ENCODE measurements at regions of chr10 and their contacts with region 1.

Region 1: DNA sequence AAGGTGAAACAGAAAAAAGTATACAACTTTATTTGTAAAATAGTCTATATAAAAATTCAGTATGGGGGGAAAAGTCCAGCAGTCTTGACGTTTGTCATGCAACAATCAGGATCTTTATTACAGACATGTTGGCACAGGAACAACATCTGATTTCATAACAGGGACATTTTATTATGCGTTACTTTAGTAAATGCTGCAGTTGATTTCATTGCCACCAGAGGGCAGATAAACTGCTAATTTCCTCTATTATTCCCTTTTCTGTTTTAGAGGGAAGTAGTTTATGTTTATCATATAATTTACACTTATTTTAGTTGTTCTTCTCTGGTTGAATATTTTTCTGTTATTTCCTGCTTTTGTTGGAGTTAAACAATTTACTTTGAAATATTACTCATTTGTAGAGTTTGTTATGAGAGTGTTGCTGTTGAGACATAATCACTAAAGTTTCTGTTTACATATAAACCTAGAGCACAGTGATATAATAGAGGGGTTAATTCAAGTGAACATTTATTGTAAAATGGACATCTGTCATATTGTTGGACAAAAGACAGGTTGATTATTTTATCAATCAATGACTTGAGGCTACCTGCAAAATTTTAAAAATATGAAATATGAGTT is 3.3 kb downstream of the PLXDC2 start:
- DNase-seq: no peak
- H3K4me3 ChIP-seq: peak overlapping the region; percentile 72 to 85
- H3K27ac ChIP-seq: peak overlapping the region; percentile 16 to 94
- H3K4me1 ChIP-seq: peaks cover 0 to 31% of the 10 kb centered on the region in 2 donors
- H3K27me3 ChIP-seq: no peaks in the 10 kb centered on the region
- CTCF ChIP-seq: peak; percentile 61 to 77 (median 61)

Region 2: GRCh38 chr10:19412531-19412930 is 407.0 kb before region 1 on chr10:
- intact Hi-C with region 1: loop called (anchors 10 kb)
- DNase-seq: no peak
- H3K4me3 ChIP-seq: no peak overlapping the region
- H3K27ac ChIP-seq: no peak overlapping the region
- H3K4me1 ChIP-seq: no peaks in the 10 kb centered on the region
- H3K27me3 ChIP-seq: no peaks in the 10 kb centered on the region
- CTCF ChIP-seq: peak in 2 of 3 experiments; percentile 52 to 64

Region 3: DNA sequence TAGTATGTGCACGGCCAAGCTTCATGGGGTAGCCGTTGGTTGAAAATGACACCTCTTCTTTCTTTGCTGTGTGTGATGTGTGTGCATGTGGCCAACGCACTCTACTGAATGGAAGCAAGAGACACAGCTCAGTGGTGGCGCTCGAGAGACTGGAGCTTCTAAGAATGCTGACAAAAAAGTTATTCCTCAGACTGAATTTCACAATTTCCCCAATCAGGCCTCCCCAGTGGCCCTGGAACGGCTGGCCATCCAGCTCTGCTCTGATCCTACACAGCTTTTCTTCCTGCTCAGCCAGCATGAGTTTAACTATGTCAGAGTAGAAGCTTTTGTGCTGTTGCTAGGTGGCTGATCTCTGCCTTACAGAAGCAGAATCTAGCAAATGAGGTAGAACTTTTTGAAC is 190.0 kb before region 1 on chr10:
- intact Hi-C with region 1: loop called (anchors 5 kb)
- DNase-seq: peak; percentile 26 to 89
- H3K4me3 ChIP-seq: peak overlapping the region in 1 of 2 donors; percentile 18
- H3K27ac ChIP-seq: peak overlapping the region; percentile 54 to 76
- H3K4me1 ChIP-seq: peaks cover 0 to 11% of the 10 kb centered on the region in 2 donors
- H3K27me3 ChIP-seq: no peaks in the 10 kb centered on the region
- CTCF ChIP-seq: peak in 2 of 3 experiments; percentile 27 to 33

Region 4: GRCh38 chr10:19803676-19804075 is 15.8 kb before region 1 on chr10:
- intact Hi-C with region 1: no loop called
- DNase-seq: no peak
- H3K4me3 ChIP-seq: no peak overlapping the region
- H3K27ac ChIP-seq: no peak overlapping the region
- H3K4me1 ChIP-seq: no peaks in the 10 kb centered on the region
- H3K27me3 ChIP-seq: no peaks in the 10 kb centered on the region
- CTCF ChIP-seq: no peak

Region 5: GRCh38 chr10:19974138-19974537 is 154.6 kb after region 1 on chr10:
- intact Hi-C with region 1: no loop called
- DNase-seq: no peak
- H3K4me3 ChIP-seq: no peak overlapping the region
- H3K27ac ChIP-seq: peak overlapping the region; percentile 62 to 65
- H3K4me1 ChIP-seq: peaks cover 0 to 11% of the 10 kb centered on the region in 2 donors
- H3K27me3 ChIP-seq: no peaks in the 10 kb centered on the region
- CTCF ChIP-seq: no peak

Region 6: GRCh38 chr10:20004087-20004523 is 184.6 kb after region 1 on chr10:
- intact Hi-C with region 1: loop called (anchors 5 kb)
- DNase-seq: peak; percentile 28 to 74
- H3K4me3 ChIP-seq: peak overlapping the region in 1 of 2 donors; percentile 40
- H3K27ac ChIP-seq: peak overlapping the region; percentile 80 to 83
- H3K4me1 ChIP-seq: peaks cover 24 to 63% of the 10 kb centered on the region in 2 donors
- H3K27me3 ChIP-seq: no peaks in the 10 kb centered on the region
- CTCF ChIP-seq: no peak

Region 7: GRCh38 chr10:20768843-20769242 is 949.3 kb after region 1 on chr10:
- intact Hi-C with region 1: loop called (anchors 1 kb)
- DNase-seq: no peak
- H3K4me3 ChIP-seq: no peak overlapping the region
- H3K27ac ChIP-seq: no peak overlapping the region
- H3K4me1 ChIP-seq: peaks cover 0 to 14% of the 10 kb centered on the region in 2 donors
- H3K27me3 ChIP-seq: no peaks in the 10 kb centered on the region
- CTCF ChIP-seq: peak; percentile 33 to 73 (median 33)